ENCODE measurements at regions of chr6 and their contacts with region 1.

Region 1: DNA sequence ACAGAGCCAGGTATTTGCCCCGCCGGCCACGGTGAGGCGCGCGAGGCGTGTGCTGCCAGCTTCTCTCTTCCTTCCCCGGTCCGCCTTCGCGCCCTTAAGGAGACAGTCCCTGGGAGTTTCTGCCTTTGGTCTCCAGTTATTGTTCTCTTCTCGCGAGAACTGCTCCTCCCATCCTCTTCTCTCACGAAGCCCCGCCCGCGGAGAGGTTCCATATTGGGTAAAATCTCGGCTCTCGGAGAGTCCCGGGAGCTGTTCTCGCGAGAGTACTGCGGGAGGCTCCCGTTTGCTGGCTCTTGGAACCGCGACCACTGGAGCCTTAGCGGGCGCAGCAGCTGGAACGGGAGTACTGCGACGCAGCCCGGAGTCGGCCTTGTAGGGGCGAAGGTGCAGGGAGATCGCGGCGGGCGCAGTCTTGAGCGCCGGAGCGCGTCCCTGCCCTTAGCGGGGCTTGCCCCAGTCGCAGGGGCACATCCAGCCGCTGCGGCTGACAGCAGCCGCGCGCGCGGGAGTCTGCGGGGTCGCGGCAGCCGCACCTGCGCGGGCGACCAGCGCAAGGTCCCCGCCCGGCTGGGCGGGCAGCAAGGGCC is at the start of gene MAPK14:
- DNase-seq: peak; percentile 99 to 100
- H3K4me3 ChIP-seq: peak within 1 kb of the TSS; percentile 71 to 99 (median 95)
- H3K27ac ChIP-seq: peak within 1 kb of the TSS; percentile 80 to 96 (median 96)
- H3K4me1 ChIP-seq: peaks cover 28 to 34% of the 10 kb centered on the region in 2 donors
- H3K27me3 ChIP-seq: no peaks in the 10 kb centered on the region
- CTCF ChIP-seq: peak; percentile 59 to 99 (median 92)
- POLR2A ChIP-seq: peak; percentile 55 to 90
- total RNA-seq, gene MAPK14: 85.2 to 201 (median 124) TPM

Region 2: GRCh38 chr6:34627296-34627695 is 1400.3 kb before region 1 on chr6:
- intact Hi-C with region 1: no loop called
- DNase-seq: no peak
- H3K4me3 ChIP-seq: no peak overlapping the region
- H3K27ac ChIP-seq: no peak overlapping the region
- H3K4me1 ChIP-seq: peaks cover 0 to 4% of the 10 kb centered on the region in 2 donors
- H3K27me3 ChIP-seq: no peaks in the 10 kb centered on the region
- CTCF ChIP-seq: no peak
- POLR2A ChIP-seq: no peak

Region 3: GRCh38 chr6:35857853-35858252 is 169.7 kb before region 1 on chr6:
- intact Hi-C with region 1: no loop called
- DNase-seq: no peak
- H3K4me3 ChIP-seq: no peak overlapping the region
- H3K27ac ChIP-seq: no peak overlapping the region
- H3K4me1 ChIP-seq: no peaks in the 10 kb centered on the region
- H3K27me3 ChIP-seq: no peaks in the 10 kb centered on the region
- CTCF ChIP-seq: no peak
- POLR2A ChIP-seq: no peak

Region 4: DNA sequence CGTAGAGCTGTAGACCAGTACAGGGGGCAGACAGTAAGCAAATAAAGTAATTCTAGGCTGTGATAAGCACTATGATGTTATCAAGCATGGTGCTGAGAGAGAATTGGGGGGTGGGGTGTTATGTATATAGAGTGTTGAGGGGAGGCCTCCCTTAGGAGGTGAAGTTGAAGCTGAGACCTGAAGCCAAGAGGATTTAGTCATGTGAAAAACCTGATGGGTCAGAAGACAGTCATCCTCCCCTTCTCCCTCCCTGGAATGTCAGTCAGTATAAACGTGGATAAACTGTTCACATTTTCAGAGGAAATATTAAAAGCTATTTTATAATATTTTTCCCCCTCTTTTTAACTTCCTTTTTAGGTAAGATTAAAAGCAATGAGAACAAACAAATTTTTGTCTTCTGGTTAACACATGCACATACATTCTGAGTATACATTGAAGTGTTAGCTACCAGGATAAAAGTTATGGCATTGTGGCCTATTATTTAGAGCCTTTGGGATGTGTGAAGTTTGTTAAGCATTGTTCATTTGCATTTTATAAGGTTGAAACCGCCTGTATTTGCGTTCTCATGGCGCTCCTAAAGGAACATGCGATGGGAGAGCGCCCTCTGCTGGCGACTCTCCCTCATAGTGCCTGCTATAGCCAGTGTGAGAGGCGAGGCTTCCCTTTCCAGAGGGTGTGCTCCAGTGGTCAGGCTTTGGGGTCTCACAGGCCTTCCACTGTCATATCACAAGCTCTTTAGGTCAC is 67.3 kb after region 1 on chr6:
- intact Hi-C with region 1: loop called (anchors 2 kb)
- DNase-seq: peak; percentile 84 to 87
- H3K4me3 ChIP-seq: no peak overlapping the region
- H3K27ac ChIP-seq: peak overlapping the region in 1 of 3 donors; percentile 24
- H3K4me1 ChIP-seq: peaks cover 5 to 8% of the 10 kb centered on the region in 2 donors
- H3K27me3 ChIP-seq: no peaks in the 10 kb centered on the region
- CTCF ChIP-seq: peak; percentile 85 to 97 (median 91)
- POLR2A ChIP-seq: no peak

Region 5: GRCh38 chr6:36196880-36197548 is 169.4 kb after region 1 on chr6:
- intact Hi-C with region 1: loop called (anchors 5 kb)
- DNase-seq: peak; percentile 99
- H3K4me3 ChIP-seq: peak overlapping the region in 2 of 3 donors; percentile 66 to 69
- H3K27ac ChIP-seq: peak overlapping the region; percentile 93 to 98 (median 95)
- H3K4me1 ChIP-seq: peaks cover 10 to 14% of the 10 kb centered on the region in 2 donors
- H3K27me3 ChIP-seq: no peaks in the 10 kb centered on the region
- CTCF ChIP-seq: no peak
- POLR2A ChIP-seq: peak in 1 of 2 donors; percentile 77

Region 6: GRCh38 chr6:36360241-36361054 is 332.9 kb after region 1 on chr6:
- intact Hi-C with region 1: loop called (anchors 10 kb)
- DNase-seq: peak; percentile 74 to 76
- H3K4me3 ChIP-seq: no peak overlapping the region
- H3K27ac ChIP-seq: no peak overlapping the region
- H3K4me1 ChIP-seq: peaks cover 0 to 18% of the 10 kb centered on the region in 2 donors
- H3K27me3 ChIP-seq: no peaks in the 10 kb centered on the region
- CTCF ChIP-seq: peak; percentile 70 to 88 (median 77)
- POLR2A ChIP-seq: no peak

Measured in thyroid gland (tissue), 4 donors.